Right ventricle myocardium superior (tissue), 1 donor: ENCODE measurements at regions of chr4 and their contacts with region 1.

Region 1: GRCh38 chr4:94561249-94562024 is 109.7 kb downstream of the PDLIM5 start:
- DNase-seq: no peak
- ATAC-seq: peak; percentile 28

Region 2: GRCh38 chr4:94274912-94275311 is 286.5 kb before region 1 on chr4:
- intact Hi-C with region 1: no loop called
- DNase-seq: no peak
- ATAC-seq: no peak

Region 3: GRCh38 chr4:94516067-94516466 is 45.4 kb before region 1 on chr4:
- intact Hi-C with region 1: loop called (anchors 10 kb)
- DNase-seq: no peak
- ATAC-seq: no peak

Region 4: GRCh38 chr4:94669672-94670664 is 108.5 kb after region 1 on chr4:
- intact Hi-C with region 1: no loop called
- DNase-seq: no peak
- ATAC-seq: no peak

Region 5: GRCh38 chr4:94690851-94691254 is 129.4 kb after region 1 on chr4:
- intact Hi-C with region 1: no loop called
- DNase-seq: no peak
- ATAC-seq: no peak